Endothelial cell of umbilical vein (primary cell): ENCODE measurements at regions of chr10 and their contacts with region 1.

Region 1: GRCh38 chr10:104121520-104122224 is at the start of gene SFR1:
- DNase-seq: peak; percentile 100
- H3K4me3 ChIP-seq: peak within 1 kb of the TSS; percentile 81 to 91 (median 89)
- H3K27ac ChIP-seq: peak within 1 kb of the TSS; percentile 97
- H3K4me1 ChIP-seq: peaks cover 27% of the 10 kb centered on the region
- H3K27me3 ChIP-seq: no peaks in the 10 kb centered on the region
- CTCF ChIP-seq: peak; percentile 64 to 76
- POLR2A ChIP-seq: peak; percentile 77
- total RNA-seq, gene SFR1: 8.3 and 8.9 TPM in 2 replicates

Region 2: GRCh38 chr10:103759100-103759781 is 362.4 kb before region 1 on chr10:
- CTCF ChIA-PET with region 1: no interaction called
- POLR2A ChIA-PET with region 1: no interaction called
- dilution Hi-C with region 1: no loop called
- intact Hi-C with region 1: loop called (anchors 5 kb)
- DNase-seq: peak; percentile 78
- H3K4me3 ChIP-seq: no peak overlapping the region
- H3K27ac ChIP-seq: peak overlapping the region; percentile 59
- H3K4me1 ChIP-seq: peaks cover 60% of the 10 kb centered on the region
- H3K27me3 ChIP-seq: no peaks in the 10 kb centered on the region
- CTCF ChIP-seq: no peak
- POLR2A ChIP-seq: no peak

Region 3: GRCh38 chr10:103966671-103967447 is 154.8 kb before region 1 on chr10 and contains the start of gene SLK:
- CTCF ChIA-PET with region 1: interaction called, 6 read pairs
- POLR2A ChIA-PET with region 1: no interaction called
- dilution Hi-C with region 1: no loop called
- intact Hi-C with region 1: loop called (anchors 1 kb)
- DNase-seq: peak; percentile 86
- H3K4me3 ChIP-seq: peak within 1 kb of the TSS; percentile 81 to 99 (median 97)
- H3K27ac ChIP-seq: peak within 1 kb of the TSS; percentile 73
- H3K4me1 ChIP-seq: peaks cover 26% of the 10 kb centered on the region
- H3K27me3 ChIP-seq: no peaks in the 10 kb centered on the region
- CTCF ChIP-seq: no peak
- POLR2A ChIP-seq: peak; percentile 83
- total RNA-seq, gene SLK: 31.8 and 36.0 TPM in 2 replicates

Region 4: DNA sequence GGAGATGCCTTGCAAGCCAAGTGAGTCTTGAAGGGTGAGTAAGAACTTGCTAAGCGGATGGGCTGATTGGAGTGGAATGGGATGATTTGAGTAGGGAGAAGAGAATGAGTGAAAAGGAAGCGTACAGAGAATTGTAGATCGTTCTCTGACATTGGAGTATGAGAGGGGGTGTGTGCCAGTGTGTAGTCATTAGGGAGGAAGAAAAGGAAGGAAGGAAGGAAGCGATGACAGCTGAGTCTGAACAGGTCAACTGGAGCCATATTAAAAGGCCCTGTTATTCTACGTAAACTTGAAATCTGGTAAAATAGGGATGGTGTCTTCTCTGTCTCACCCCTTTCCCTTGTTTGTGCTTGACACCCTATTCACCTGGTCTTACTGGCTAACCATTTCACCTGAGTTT is 99.6 kb before region 1 on chr10:
- CTCF ChIA-PET with region 1: interaction called, 5 read pairs
- POLR2A ChIA-PET with region 1: no interaction called
- dilution Hi-C with region 1: no loop called
- intact Hi-C with region 1: loop called (anchors 1 kb)
- DNase-seq: peak; percentile 46
- H3K4me3 ChIP-seq: peak overlapping the region in 1 of 3 experiments; percentile 1
- H3K27ac ChIP-seq: peak overlapping the region; percentile 65
- H3K4me1 ChIP-seq: peaks cover 41% of the 10 kb centered on the region
- H3K27me3 ChIP-seq: no peaks in the 10 kb centered on the region
- CTCF ChIP-seq: no peak
- POLR2A ChIP-seq: peak; percentile 46

Region 5: DNA sequence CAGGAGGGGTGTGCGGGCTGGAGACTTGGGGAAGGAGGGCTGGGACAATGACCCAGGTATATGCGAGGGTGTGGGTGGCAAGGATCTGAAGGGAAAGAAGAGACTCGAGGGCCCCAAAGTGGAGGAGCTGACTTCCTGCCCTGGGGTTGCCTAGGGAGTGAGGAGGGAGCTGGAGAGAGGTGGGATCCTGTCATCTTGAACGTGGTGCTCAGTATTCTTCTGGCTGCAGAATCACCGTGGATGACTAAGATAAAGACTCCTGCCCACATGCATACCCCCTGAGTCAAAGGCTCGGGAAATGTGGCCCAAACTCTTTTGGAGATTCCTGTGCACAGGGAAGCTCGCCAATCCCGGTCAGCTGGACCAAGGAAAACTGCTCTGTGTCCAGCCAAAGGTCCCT is 67.2 kb before region 1 on chr10:
- CTCF ChIA-PET with region 1: interaction called, 87 read pairs
- POLR2A ChIA-PET with region 1: interaction called, 3 read pairs
- dilution Hi-C with region 1: no loop called
- intact Hi-C with region 1: loop called (anchors 1 kb)
- DNase-seq: peak; percentile 30
- H3K4me3 ChIP-seq: no peak overlapping the region
- H3K27ac ChIP-seq: peak overlapping the region; percentile 64
- H3K4me1 ChIP-seq: peaks cover 43% of the 10 kb centered on the region
- H3K27me3 ChIP-seq: no peaks in the 10 kb centered on the region
- CTCF ChIP-seq: no peak
- POLR2A ChIP-seq: no peak

Region 6: DNA sequence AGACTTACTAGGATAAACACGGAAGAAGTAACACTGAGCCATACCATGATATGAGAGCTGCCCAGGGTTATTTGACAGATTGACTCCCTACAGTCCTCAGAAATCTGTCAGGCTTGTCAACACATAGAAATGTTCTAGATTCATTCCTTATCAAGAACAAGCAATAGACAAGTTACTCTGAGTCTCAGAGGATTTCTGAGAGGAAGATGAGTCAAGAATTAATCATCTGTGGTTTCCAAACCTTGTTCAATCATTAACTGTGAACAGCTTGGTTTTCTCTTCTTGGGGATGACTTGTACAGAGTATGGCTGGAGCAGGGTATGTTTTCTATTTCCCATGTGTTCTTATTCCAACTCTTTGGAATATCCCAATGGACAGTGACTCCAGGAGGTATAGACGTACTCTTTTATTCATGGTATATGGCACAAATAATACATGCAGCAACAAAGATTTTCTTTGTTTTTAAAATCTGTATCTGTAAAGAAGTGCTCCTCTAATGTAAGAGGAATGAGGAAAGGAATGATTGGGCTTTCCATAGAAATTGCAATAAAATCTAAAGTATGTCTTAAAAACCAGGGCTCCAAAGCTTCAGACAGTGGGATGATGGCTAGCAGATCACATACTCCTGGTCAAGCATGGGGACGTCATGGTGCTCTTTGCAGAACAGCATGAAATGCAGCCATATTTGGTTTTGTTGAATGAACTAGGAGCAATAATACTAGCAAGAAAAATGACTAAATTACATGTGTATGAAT is 11.6 kb before region 1 on chr10:
- CTCF ChIA-PET with region 1: interaction called, 11 read pairs
- POLR2A ChIA-PET with region 1: no interaction called
- dilution Hi-C with region 1: no loop called
- intact Hi-C with region 1: no loop called
- DNase-seq: peak; percentile 62
- H3K4me3 ChIP-seq: no peak overlapping the region
- H3K27ac ChIP-seq: peak overlapping the region; percentile 35
- H3K4me1 ChIP-seq: peaks cover 19% of the 10 kb centered on the region
- H3K27me3 ChIP-seq: no peaks in the 10 kb centered on the region
- CTCF ChIP-seq: no peak
- POLR2A ChIP-seq: peak; percentile 28

Region 7: DNA sequence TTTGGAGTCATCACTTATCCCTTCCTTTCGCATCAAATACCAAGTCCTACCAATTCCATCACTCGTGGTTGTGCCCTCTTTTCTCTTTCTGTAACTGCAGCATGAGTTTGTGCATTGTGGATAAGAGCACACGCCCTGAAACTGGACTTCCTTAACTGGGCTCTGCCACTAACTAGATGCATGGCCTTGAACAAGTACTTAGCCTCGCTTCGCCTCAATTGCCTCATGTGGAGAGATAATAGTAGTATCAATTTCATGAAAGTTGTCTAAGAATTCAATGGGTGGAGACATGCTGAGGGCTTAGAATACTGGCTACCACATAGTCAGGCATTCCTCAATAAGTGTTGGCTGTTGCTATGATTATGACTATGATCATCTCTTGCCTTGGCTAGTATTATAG is 69.0 kb after region 1 on chr10:
- CTCF ChIA-PET with region 1: no interaction called
- POLR2A ChIA-PET with region 1: no interaction called
- dilution Hi-C with region 1: no loop called
- intact Hi-C with region 1: no loop called
- DNase-seq: no peak
- H3K4me3 ChIP-seq: no peak overlapping the region
- H3K27ac ChIP-seq: no peak overlapping the region
- H3K4me1 ChIP-seq: no peaks in the 10 kb centered on the region
- H3K27me3 ChIP-seq: peaks cover 12 to 13% of the 10 kb centered on the region in 2 experiments
- CTCF ChIP-seq: no peak
- POLR2A ChIP-seq: no peak

Region 8: DNA sequence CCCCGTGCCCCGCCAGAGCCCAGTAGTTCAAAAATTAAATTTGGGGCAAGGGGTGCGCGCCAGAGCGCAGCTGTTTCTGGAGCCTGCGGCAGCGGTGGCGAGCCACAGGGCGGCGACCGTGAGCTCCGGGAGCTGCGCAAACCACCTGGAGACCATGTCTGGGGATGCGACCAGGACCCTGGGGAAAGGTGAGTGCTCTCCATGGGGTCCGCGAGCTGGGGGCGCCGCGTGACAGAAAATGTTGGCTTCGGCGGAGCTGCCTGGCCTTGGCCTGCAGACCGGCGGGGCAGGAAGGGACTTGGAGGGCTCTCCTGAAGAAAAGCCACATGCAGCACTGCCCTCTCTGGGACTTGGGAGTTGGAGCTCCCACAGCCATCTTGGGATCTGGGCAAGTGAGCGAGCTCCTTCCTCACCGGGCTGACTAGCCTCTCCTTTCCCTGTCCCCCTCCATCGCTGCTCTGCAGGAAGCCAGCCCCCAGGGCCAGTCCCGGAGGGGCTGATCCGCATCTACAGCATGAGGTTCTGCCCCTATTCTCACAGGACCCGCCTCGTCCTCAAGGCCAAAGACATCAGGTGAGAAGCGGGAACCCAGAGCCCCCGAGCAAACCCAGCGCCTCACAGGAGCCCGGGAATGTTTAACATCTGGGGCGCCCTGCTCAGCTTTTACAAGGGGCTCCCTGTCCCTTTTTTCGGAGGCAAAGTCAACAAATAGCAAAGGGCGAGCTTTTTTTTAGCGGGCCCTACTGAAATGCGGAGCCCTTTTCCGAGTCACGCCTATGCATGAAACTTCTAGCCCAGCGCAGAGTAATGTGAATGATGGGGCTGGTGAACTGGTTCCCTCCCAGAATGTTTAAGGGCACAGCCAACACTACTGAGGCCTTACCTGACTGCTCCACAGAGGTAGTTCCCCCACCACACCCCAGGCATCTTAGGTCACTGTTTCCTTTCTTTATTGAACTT is 153.4 kb after region 1 on chr10:
- CTCF ChIA-PET with region 1: interaction called, 14 read pairs
- POLR2A ChIA-PET with region 1: no interaction called
- dilution Hi-C with region 1: no loop called
- intact Hi-C with region 1: no loop called
- DNase-seq: peak; percentile 50
- H3K4me3 ChIP-seq: no peak overlapping the region
- H3K27ac ChIP-seq: no peak overlapping the region
- H3K4me1 ChIP-seq: no peaks in the 10 kb centered on the region
- H3K27me3 ChIP-seq: peaks cover 0 to 6% of the 10 kb centered on the region in 2 experiments
- CTCF ChIP-seq: peak; percentile 88 to 96
- POLR2A ChIP-seq: no peak